GM12878 (cell line): ENCODE measurements at regions of chr6 and their contacts with region 1.

Region 1: DNA sequence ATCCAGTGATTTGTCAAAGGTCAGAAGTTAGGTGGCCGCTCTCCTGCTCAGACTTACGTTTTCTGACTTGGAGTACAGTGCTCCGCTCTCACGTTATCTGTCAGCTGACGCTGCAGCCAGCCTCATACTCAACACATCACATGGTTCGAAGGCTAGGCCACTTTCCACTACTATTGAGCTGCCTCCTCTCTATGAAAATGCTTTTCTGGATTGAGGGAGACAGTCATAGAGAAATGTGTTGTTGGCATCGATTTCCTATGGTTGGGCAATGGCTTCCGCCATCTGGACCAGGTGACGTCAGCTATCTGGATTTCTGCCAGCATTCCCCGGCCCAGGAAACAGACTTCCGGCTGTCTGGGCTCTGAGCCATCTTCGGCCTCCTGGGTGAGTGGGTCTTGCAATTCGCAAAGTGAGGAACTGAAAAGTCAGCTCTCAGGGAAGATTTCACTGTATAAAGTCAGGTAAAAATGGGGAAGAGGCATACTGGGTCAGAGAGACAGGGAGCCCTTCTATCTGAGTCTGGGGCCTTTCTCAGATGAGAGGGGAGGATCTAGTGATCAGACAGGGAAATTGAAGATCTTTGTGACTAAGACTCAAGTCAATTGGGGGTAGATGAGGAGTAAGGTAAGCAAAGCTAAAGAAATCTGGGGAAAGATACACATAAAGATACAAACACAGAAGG is 37.5 kb upstream of the IER3 start:
- DNase-seq: peak; percentile 66
- ATAC-seq: peak; percentile 75
- H3K4me3 ChIP-seq: no peak overlapping the region
- H3K27ac ChIP-seq: peak overlapping the region; percentile 44
- H3K4me1 ChIP-seq: peaks cover 15% of the 10 kb centered on the region
- H3K27me3 ChIP-seq: no peaks in the 10 kb centered on the region
- CTCF ChIP-seq: no peak
- EP300 ChIP-seq: no peak; a peak in 1 of 4 replicates
- POLR2A ChIP-seq: no peak
- RAD21 ChIP-seq: no peak

Region 2: GRCh38 chr6:30544666-30545272 is 237.1 kb before region 1 on chr6:
- CTCF ChIA-PET with region 1: no interaction called
- POLR2A ChIA-PET with region 1: no interaction called
- RAD21 ChIA-PET with region 1: no interaction called
- SMC1A ChIA-PET with region 1: no interaction called
- in situ Hi-C with region 1: no loop called
- intact Hi-C with region 1: no loop called
- DNase-seq: no peak
- ATAC-seq: peak; percentile 81
- H3K4me3 ChIP-seq: no peak overlapping the region
- H3K27ac ChIP-seq: no peak overlapping the region
- H3K4me1 ChIP-seq: peaks cover 7% of the 10 kb centered on the region; the same call in 1 of the 2 replicates
- H3K27me3 ChIP-seq: no peaks in the 10 kb centered on the region
- CTCF ChIP-seq: peak; percentile 73 to 82 (median 78)
- EP300 ChIP-seq: no peak
- POLR2A ChIP-seq: no peak
- RAD21 ChIP-seq: peak; percentile 66

Region 3: GRCh38 chr6:30646458-30647241 is 135.2 kb before region 1 on chr6 and contains the start of gene C6orf136:
- CTCF ChIA-PET with region 1: no interaction called
- POLR2A ChIA-PET with region 1: no interaction called
- RAD21 ChIA-PET with region 1: no interaction called
- SMC1A ChIA-PET with region 1: no interaction called
- in situ Hi-C with region 1: no loop called
- intact Hi-C with region 1: no loop called
- DNase-seq: peak; percentile 75
- ATAC-seq: peak; percentile 88
- H3K4me3 ChIP-seq: peak within 1 kb of the TSS; percentile 77
- H3K27ac ChIP-seq: peak within 1 kb of the TSS; percentile 87
- H3K4me1 ChIP-seq: peaks cover 2% of the 10 kb centered on the region; the same call in 1 of the 2 replicates
- H3K27me3 ChIP-seq: no peaks in the 10 kb centered on the region
- CTCF ChIP-seq: no peak
- EP300 ChIP-seq: no peak
- POLR2A ChIP-seq: no peak
- RAD21 ChIP-seq: no peak
- polyA plus RNA-seq, gene C6orf136: 10.0 to 14.6 TPM

Region 4: DNA sequence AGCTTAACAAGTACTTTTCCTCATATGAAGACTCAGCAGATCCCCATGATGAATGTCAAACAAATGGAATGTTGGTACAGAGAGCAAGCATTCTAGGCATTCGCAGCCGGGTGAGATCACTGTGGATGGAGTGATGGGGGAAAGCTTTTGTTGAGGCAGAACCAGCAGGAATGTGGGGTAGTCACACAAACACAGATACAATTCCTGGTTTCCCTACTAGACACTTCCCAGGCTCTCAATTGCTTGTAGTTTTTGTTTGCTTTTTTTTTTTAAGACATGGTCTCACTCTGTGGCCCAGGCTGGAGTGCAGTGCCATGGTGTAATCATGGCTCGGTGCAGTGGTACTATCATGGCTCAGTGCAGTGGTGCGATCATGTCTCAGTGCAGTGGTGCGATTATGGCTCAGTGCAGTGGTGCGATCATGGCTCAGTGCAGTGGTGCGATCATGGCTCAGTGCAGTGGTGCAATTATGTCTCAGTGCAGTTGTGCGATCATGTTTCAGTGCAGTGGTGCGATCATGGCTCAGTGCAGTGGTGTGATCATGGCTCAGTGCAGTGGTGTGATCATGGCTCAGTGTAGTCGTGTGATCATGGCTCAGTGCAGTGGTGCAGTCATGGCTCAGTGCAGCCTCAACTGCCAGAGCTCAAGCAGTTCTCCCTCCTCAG is 22.2 kb before region 1 on chr6:
- CTCF ChIA-PET with region 1: interaction called, 4 read pairs
- POLR2A ChIA-PET with region 1: interaction called, 3 read pairs
- RAD21 ChIA-PET with region 1: interaction called, 14 read pairs
- SMC1A ChIA-PET with region 1: interaction called, 11 read pairs
- in situ Hi-C with region 1: no loop called
- intact Hi-C with region 1: no loop called
- DNase-seq: no peak
- ATAC-seq: no peak
- H3K4me3 ChIP-seq: no peak overlapping the region
- H3K27ac ChIP-seq: peak overlapping the region; percentile 35; the same call in 1 of the 2 replicates
- H3K4me1 ChIP-seq: peaks cover 22% of the 10 kb centered on the region; the same call in 1 of the 2 replicates
- H3K27me3 ChIP-seq: no peaks in the 10 kb centered on the region
- CTCF ChIP-seq: no peak
- EP300 ChIP-seq: no peak
- POLR2A ChIP-seq: no peak
- RAD21 ChIP-seq: no peak

Region 5: GRCh38 chr6:30793521-30794194 is 11.8 kb after region 1 on chr6:
- CTCF ChIA-PET with region 1: interaction called, 7 read pairs
- POLR2A ChIA-PET with region 1: interaction called, 5 read pairs
- RAD21 ChIA-PET with region 1: interaction called, 4 read pairs
- SMC1A ChIA-PET with region 1: interaction called, 15 read pairs
- in situ Hi-C with region 1: no loop called
- intact Hi-C with region 1: no loop called
- DNase-seq: peak; percentile 57
- ATAC-seq: peak; percentile 97
- H3K4me3 ChIP-seq: no peak overlapping the region
- H3K27ac ChIP-seq: peak overlapping the region; percentile 84
- H3K4me1 ChIP-seq: peaks cover 16% of the 10 kb centered on the region
- H3K27me3 ChIP-seq: no peaks in the 10 kb centered on the region
- CTCF ChIP-seq: no peak
- EP300 ChIP-seq: 0 out of 4 replicates have a peak, but pooled peaks of 1 of the 2 experiments have one; percentile 36
- POLR2A ChIP-seq: no peak
- RAD21 ChIP-seq: no peak

Region 6: GRCh38 chr6:30876039-30876730 is 94.3 kb after region 1 on chr6:
- CTCF ChIA-PET with region 1: no interaction called
- POLR2A ChIA-PET with region 1: no interaction called
- RAD21 ChIA-PET with region 1: no interaction called
- SMC1A ChIA-PET with region 1: no interaction called
- in situ Hi-C with region 1: no loop called
- intact Hi-C with region 1: no loop called
- DNase-seq: no peak
- ATAC-seq: no peak
- H3K4me3 ChIP-seq: no peak overlapping the region
- H3K27ac ChIP-seq: peak overlapping the region; percentile 14; the same call in 1 of the 2 replicates
- H3K4me1 ChIP-seq: peaks cover 15% of the 10 kb centered on the region
- H3K27me3 ChIP-seq: no peaks in the 10 kb centered on the region
- CTCF ChIP-seq: no peak
- EP300 ChIP-seq: no peak
- POLR2A ChIP-seq: no peak
- RAD21 ChIP-seq: no peak